ENCODE measurements at regions of chr13 and their contacts with region 1.

Region 1: DNA sequence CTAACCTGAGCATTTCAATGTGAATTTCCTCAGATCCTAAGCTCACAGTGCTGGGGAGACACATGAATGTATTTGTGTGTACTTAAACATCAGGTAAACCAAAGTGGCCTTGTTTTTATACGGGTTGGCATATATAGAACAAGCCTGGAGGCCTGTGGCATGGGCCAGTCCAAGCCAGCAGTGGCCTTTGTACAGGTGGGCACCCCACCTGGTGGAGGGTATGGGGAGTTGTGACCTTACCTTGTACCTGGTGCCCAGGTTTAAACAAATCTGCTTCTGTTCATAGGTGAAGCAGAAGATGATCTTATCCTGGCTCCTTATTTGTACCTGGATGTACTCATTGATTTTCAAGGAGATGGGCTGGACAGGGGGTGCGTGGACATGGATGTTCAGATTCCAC is 71.0 kb downstream of the ERICH6B start:
- DNase-seq: no peak
- ATAC-seq: no peak

Region 2: GRCh38 chr13:46232281-46232680 is 687.8 kb after region 1 on chr13:
- intact Hi-C with region 1: loop called (anchors 10 kb)
- DNase-seq: no peak
- ATAC-seq: no peak

Measured in left ventricle myocardium superior (tissue), 1 donor.